ENCODE measurements at regions of chr4 and their contacts with region 1.

Region 1: DNA sequence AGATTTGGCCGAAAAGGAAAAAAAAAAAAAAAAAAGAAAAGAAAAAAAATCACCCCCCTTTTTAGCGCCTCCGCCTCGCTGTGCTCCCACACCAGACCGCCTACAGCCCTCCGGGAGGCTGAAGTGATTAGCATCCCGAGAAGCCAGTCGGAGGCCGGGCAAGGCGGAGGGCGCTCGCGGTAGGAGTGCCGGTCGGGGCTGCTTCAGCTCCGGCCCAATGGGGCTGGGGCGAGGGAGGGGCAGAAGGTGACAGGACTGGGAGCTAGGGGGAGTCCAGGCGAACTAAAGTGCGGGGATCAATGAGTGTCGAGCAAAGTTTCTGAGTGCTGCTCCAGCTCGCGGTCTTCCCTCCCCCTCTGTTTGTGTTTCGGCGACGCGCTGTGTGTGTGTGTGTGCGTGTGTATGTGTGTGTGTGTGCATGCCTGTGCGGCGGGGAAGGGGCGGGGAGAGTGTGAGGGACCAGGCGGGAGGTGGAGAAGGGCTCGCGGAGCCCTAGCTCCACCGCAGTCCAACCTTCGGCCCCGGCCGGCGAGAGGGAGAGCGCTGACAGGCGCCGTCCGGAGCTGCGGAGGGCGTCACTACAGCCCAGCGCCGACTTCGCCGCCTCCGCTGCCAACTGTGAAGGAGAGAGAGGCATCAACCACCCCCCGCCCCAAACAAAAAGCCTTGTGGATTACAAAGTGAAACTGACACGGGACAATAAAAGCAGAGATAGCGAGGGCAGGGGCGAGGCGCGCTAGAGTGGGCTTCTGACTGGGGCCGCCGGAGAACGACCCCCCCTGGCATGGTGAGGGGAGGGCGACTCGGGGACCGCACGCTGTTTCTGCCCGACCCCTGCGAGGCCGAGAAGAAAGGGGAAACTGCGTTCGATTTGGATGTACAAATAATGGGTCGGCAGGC is at the start of gene FAT4:
- DNase-seq: peak; percentile 94
- H3K4me3 ChIP-seq: peak within 1 kb of the TSS; percentile 93 to 96 (median 96)
- H3K27ac ChIP-seq: no peak within 1 kb of the TSS
- H3K4me1 ChIP-seq: peaks cover 17% of the 10 kb centered on the region
- H3K27me3 ChIP-seq: peaks cover 2% of the 10 kb centered on the region
- CTCF ChIP-seq: peak in 1 of 2 donors; percentile 2
- total RNA-seq, gene FAT4: 1.5 to 5.5 TPM

Region 2: GRCh38 chr4:125489952-125490690 is 175.2 kb after region 1 on chr4:
- CTCF ChIA-PET with region 1: no interaction called
- dilution Hi-C with region 1: no loop called
- in situ Hi-C with region 1: no loop called
- intact Hi-C with region 1: loop called (anchors 10 kb)
- DNase-seq: no peak
- H3K4me3 ChIP-seq: no peak overlapping the region
- H3K27ac ChIP-seq: no peak overlapping the region
- H3K4me1 ChIP-seq: no peaks in the 10 kb centered on the region
- H3K27me3 ChIP-seq: no peaks in the 10 kb centered on the region
- CTCF ChIP-seq: no peak

Region 3: DNA sequence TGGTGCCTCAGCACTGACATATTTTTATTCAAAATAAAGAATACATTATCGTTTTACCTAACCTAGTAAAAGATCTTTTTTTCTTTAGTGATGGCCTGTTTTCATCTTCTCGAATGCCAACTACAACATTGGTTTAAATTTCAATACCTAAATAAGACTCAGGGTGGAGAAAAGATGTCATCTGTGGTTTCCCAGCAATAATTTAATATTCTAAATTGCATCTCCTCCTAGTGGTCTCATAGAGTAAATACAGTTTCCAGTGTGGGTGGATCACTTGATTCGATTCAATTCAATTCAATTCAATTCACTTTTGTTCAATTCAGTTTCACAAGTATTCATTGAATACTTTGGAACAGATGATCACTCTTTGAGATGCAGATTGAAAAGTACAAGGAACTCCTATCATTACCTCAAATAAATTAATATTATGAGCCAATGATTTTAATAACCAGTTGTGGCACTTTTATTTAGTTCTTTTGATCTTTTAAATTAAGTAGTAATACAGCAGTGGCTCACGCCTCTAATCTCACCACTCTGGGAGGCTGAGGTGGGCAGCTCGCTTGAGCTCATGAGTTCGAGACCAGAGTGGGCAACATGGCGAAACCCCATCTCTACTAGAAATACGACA is 427.0 kb after region 1 on chr4:
- CTCF ChIA-PET with region 1: no interaction called
- dilution Hi-C with region 1: no loop called
- in situ Hi-C with region 1: loop called (anchors 5 kb)
- intact Hi-C with region 1: loop called (anchors 1 kb)
- DNase-seq: peak; percentile 20
- H3K4me3 ChIP-seq: no peak overlapping the region
- H3K27ac ChIP-seq: no peak overlapping the region
- H3K4me1 ChIP-seq: no peaks in the 10 kb centered on the region
- H3K27me3 ChIP-seq: no peaks in the 10 kb centered on the region
- CTCF ChIP-seq: peak; percentile 63 to 82

Region 4: GRCh38 chr4:126395664-126396063 is 1080.7 kb after region 1 on chr4:
- CTCF ChIA-PET with region 1: no interaction called
- dilution Hi-C with region 1: no loop called
- in situ Hi-C with region 1: no loop called
- intact Hi-C with region 1: loop called (anchors 5 kb)
- DNase-seq: peak; percentile 55
- H3K4me3 ChIP-seq: no peak overlapping the region
- H3K27ac ChIP-seq: no peak overlapping the region
- H3K4me1 ChIP-seq: no peaks in the 10 kb centered on the region
- H3K27me3 ChIP-seq: peaks cover 4% of the 10 kb centered on the region
- CTCF ChIP-seq: no peak

Region 5: GRCh38 chr4:126604268-126604867 is 1289.4 kb after region 1 on chr4:
- CTCF ChIA-PET with region 1: no interaction called
- dilution Hi-C with region 1: no loop called
- in situ Hi-C with region 1: loop called (anchors 25 kb)
- intact Hi-C with region 1: loop called (anchors 5 kb)
- DNase-seq: peak; percentile 19
- H3K4me3 ChIP-seq: no peak overlapping the region
- H3K27ac ChIP-seq: no peak overlapping the region
- H3K4me1 ChIP-seq: no peaks in the 10 kb centered on the region
- H3K27me3 ChIP-seq: no peaks in the 10 kb centered on the region
- CTCF ChIP-seq: peak; percentile 79 to 83